HepG2 (cell line): ENCODE measurements at regions of chr2 and their contacts with region 1.

Region 1: DNA sequence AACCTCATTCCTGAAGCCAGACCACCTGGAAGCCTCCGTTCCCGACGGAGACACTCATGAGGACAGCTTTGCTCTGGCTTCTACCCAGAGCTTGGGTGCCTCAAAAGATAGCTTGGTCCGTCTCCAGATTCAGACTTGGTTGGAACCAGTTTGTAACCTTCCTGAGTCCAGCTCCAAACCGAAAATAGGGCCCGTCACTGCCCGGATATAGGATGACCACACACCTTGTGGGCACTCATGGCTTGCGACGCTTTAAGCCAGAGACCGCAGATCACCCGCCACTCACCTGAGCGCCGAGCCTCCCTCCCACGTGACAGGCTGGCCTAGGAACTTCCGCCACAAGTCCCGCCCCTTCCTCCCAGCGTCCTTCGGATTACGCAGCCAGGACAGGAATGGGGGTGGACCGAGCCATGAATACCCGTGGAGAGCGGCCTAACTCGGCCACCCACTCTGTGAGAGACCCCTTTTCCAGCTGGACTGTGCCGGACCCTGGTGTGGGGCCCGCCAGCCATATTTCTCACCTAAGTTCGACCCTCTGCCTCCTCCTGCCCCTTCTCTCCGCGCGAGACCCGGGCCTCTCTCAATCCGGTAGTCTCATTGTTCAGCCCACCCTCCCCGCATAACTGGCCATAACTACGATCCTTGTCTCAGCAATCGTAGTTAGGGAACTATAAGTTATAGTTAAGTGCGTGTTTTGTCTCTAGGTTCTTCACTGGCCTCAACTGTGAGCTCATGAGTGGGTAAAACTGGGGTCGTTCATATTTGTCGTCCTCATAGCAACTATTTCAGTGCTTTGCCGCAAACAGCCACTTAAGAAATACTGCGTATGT is at the start of gene MPV17:
- DNase-seq: peak; percentile 96
- ATAC-seq: peak; percentile 85
- H3K4me3 ChIP-seq: peak within 1 kb of the TSS; percentile 82 to 86 (median 83)
- H3K27ac ChIP-seq: peak within 1 kb of the TSS; percentile 91
- H3K4me1 ChIP-seq: peaks cover 33% of the 10 kb centered on the region
- H3K27me3 ChIP-seq: peaks cover 0 to 4% of the 10 kb centered on the region in 2 experiments; a peak in 1 of 5 replicates
- CTCF ChIP-seq: no peak
- EP300 ChIP-seq: 0 out of 4 replicates have a peak, but pooled peaks of 1 of the 2 experiments have one; percentile 45
- POLR2A ChIP-seq: peak; percentile 96 to 97
- RAD21 ChIP-seq: no peak; the same call in 1 of the 2 replicates
- total RNA-seq, gene MPV17: 37.0 and 48.9 TPM in 2 replicates

Region 2: GRCh38 chr2:27291865-27292264 is 31.1 kb before region 1 on chr2:
- CTCF ChIA-PET with region 1: no interaction called
- POLR2A ChIA-PET with region 1: interaction called, 3 read pairs
- in situ Hi-C with region 1: no loop called
- intact Hi-C with region 1: loop called (anchors 1 kb)
- DNase-seq: peak; percentile 44
- ATAC-seq: peak; percentile 78
- H3K4me3 ChIP-seq: peak overlapping the region; percentile 13 to 52 (median 25); a peak in 2 of 6 replicates
- H3K27ac ChIP-seq: no peak overlapping the region
- H3K4me1 ChIP-seq: peaks cover 82% of the 10 kb centered on the region
- H3K27me3 ChIP-seq: no peaks in the 10 kb centered on the region
- CTCF ChIP-seq: peak; percentile 78
- EP300 ChIP-seq: no peak
- POLR2A ChIP-seq: no peak
- RAD21 ChIP-seq: no peak; the same call in 1 of the 2 replicates

Region 3: GRCh38 chr2:27335311-27335710 is 12.3 kb after region 1 on chr2:
- CTCF ChIA-PET with region 1: no interaction called
- POLR2A ChIA-PET with region 1: interaction called, 19 read pairs
- in situ Hi-C with region 1: no loop called
- intact Hi-C with region 1: no loop called
- DNase-seq: no peak
- ATAC-seq: peak; percentile 7; the same call in 1 of the 3 replicates
- H3K4me3 ChIP-seq: no peak overlapping the region
- H3K27ac ChIP-seq: no peak overlapping the region
- H3K4me1 ChIP-seq: no peaks in the 10 kb centered on the region
- H3K27me3 ChIP-seq: no peaks in the 10 kb centered on the region
- CTCF ChIP-seq: no peak
- EP300 ChIP-seq: no peak
- POLR2A ChIP-seq: peak in 1 of 2 experiments; percentile 38; a peak in 1 of 4 replicates
- RAD21 ChIP-seq: no peak

Region 4: GRCh38 chr2:27363933-27364332 is 41.0 kb after region 1 on chr2:
- CTCF ChIA-PET with region 1: interaction called, 15 read pairs
- POLR2A ChIA-PET with region 1: interaction called, 41 read pairs
- in situ Hi-C with region 1: no loop called
- intact Hi-C with region 1: no loop called
- DNase-seq: no peak
- ATAC-seq: peak; percentile 12
- H3K4me3 ChIP-seq: no peak overlapping the region
- H3K27ac ChIP-seq: no peak overlapping the region
- H3K4me1 ChIP-seq: peaks cover 23% of the 10 kb centered on the region
- H3K27me3 ChIP-seq: no peaks in the 10 kb centered on the region
- CTCF ChIP-seq: no peak
- EP300 ChIP-seq: no peak
- POLR2A ChIP-seq: no peak
- RAD21 ChIP-seq: no peak

Region 5: DNA sequence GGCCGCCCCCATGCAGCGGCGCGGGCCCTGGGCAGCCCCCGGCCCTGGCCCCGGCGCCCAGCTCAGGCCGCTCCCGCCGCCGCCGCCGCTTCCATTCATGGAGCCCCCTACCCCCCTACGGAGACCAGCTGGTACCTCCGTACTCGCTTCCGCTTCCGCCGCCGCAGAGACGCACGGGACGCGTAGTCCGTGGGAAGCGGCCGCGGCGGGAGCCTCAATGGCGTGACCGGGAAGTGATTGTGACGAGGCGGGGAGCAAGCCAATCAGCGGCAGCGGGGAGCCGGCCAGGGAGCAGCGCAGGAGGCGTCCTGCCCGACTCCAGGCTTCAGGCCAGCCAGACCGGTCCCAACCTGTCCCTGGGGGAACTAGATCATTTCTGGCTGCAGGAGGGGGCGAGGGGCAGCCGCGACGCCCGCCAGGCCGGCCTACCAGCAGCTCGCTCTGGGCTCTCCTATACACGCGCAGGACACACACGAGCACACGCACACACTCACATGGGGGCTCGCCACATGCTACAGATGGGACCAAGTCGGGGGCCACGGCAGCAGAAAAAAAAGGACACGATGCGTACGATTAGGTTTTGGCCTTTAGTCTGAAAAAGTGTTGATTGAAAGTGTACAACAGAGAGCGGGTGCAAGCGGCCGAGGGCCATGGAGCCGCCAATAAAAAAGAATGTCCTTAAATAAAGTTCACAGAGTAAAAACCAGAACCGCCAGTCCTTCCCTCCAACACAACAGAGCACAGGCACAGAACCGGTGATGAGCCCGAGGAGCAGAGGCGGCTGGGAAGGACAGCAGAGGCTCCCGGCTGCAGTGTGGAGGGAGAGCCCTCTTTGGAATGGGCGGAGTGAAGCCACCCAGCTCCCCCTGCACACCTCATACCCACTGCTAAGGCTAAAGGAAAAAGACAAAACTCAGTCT is 57.9 kb after region 1 on chr2 and contains the start of gene ZNF513:
- CTCF ChIA-PET with region 1: interaction called, 3 read pairs
- POLR2A ChIA-PET with region 1: interaction called, 34 read pairs
- in situ Hi-C with region 1: no loop called
- intact Hi-C with region 1: loop called (anchors 1 kb)
- DNase-seq: peak; percentile 63
- ATAC-seq: peak; percentile 56
- H3K4me3 ChIP-seq: peak within 1 kb of the TSS; percentile 50 to 75 (median 63)
- H3K27ac ChIP-seq: peak within 1 kb of the TSS; percentile 85
- H3K4me1 ChIP-seq: peaks cover 26% of the 10 kb centered on the region
- H3K27me3 ChIP-seq: no peaks in the 10 kb centered on the region
- CTCF ChIP-seq: peak; percentile 10; the same call in 1 of the 2 replicates
- EP300 ChIP-seq: 0 out of 4 replicates have a peak, but pooled peaks of 1 of the 2 experiments have one; percentile 5
- POLR2A ChIP-seq: peak in 1 of 2 experiments; percentile 17; a peak in 1 of 4 replicates
- RAD21 ChIP-seq: peak; percentile 11; the same call in 1 of the 2 replicates
- total RNA-seq, gene ZNF513: 2.4 and 4.9 TPM in 2 replicates

Region 6: GRCh38 chr2:27421028-27421427 is 98.0 kb after region 1 on chr2:
- CTCF ChIA-PET with region 1: no interaction called
- POLR2A ChIA-PET with region 1: no interaction called
- in situ Hi-C with region 1: no loop called
- intact Hi-C with region 1: no loop called
- DNase-seq: no peak
- ATAC-seq: no peak
- H3K4me3 ChIP-seq: no peak overlapping the region
- H3K27ac ChIP-seq: no peak overlapping the region
- H3K4me1 ChIP-seq: peaks cover 38% of the 10 kb centered on the region
- H3K27me3 ChIP-seq: no peaks in the 10 kb centered on the region
- CTCF ChIP-seq: no peak
- EP300 ChIP-seq: no peak
- POLR2A ChIP-seq: no peak
- RAD21 ChIP-seq: no peak

Region 7: GRCh38 chr2:27663463-27664249 is 340.7 kb after region 1 on chr2 and contains the starts of genes SLC4A1AP and SUPT7L:
- CTCF ChIA-PET with region 1: no interaction called
- POLR2A ChIA-PET with region 1: no interaction called
- in situ Hi-C with region 1: no loop called
- intact Hi-C with region 1: loop called (anchors 1 kb)
- DNase-seq: peak; percentile 88
- ATAC-seq: peak; percentile 86
- H3K4me3 ChIP-seq: peak within 1 kb of the TSS; percentile 81 to 94 (median 84)
- H3K27ac ChIP-seq: peak within 1 kb of the TSS; percentile 83
- H3K4me1 ChIP-seq: peaks cover 28% of the 10 kb centered on the region
- H3K27me3 ChIP-seq: no peaks in the 10 kb centered on the region; a peak in 1 of 5 replicates
- CTCF ChIP-seq: peak; percentile 29
- EP300 ChIP-seq: no peak
- POLR2A ChIP-seq: peak; percentile 79 to 81
- RAD21 ChIP-seq: no peak
- total RNA-seq, gene SLC4A1AP: 44.6 and 59.0 TPM in 2 replicates
- total RNA-seq, gene SUPT7L: 28.7 and 32.9 TPM in 2 replicates